MCF 10A (cell line): ENCODE measurements at regions of chr13 and their contacts with region 1.

Region 1: DNA sequence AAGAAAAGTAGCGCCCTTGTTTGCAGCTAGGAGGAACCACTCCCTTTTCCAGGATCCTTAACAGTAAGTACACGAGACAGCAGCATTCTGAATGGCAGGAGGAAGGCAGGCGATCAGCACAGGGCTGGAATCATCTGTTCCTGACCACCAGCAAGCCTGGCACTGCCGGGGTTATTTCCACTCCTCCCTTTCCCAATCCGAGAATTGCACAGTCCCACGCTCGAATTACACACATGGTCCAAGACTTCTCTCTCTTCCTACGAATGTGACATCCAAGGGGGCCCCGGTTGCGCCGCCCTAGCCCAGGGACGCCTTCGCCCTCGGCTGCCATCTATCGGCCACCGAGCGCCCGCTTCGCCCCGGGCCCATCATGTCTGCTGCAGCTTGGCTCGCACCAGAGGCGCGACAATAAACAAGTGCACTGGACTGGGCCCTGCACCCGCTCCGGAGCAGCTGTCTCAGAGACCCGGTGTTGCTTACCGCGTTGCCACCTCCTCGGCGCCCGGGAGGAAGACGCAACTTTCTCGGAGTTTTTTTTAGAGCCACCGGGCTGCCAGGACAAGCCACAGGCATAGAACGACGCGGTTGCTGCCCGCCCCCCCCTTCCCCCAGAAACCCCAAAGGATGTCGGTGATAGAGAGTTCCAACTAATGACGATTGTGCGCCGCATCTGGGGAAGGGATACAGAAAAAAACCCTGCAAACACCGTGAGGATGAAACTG is at the start of gene SLITRK5:
- DNase-seq: peak; percentile 94
- H3K4me3 Mint-ChIP-seq: peak within 1 kb of the TSS; percentile 85
- H3K27ac Mint-ChIP-seq: peak within 1 kb of the TSS; percentile 80
- H3K4me1 Mint-ChIP-seq: no peaks in the 10 kb centered on the region
- H3K27me3 Mint-ChIP-seq: no peaks in the 10 kb centered on the region
- CTCF ChIP-seq: peak; percentile 86
- total RNA-seq, gene SLITRK5: 0.16 and 0.25 TPM in 2 replicates

Region 2: DNA sequence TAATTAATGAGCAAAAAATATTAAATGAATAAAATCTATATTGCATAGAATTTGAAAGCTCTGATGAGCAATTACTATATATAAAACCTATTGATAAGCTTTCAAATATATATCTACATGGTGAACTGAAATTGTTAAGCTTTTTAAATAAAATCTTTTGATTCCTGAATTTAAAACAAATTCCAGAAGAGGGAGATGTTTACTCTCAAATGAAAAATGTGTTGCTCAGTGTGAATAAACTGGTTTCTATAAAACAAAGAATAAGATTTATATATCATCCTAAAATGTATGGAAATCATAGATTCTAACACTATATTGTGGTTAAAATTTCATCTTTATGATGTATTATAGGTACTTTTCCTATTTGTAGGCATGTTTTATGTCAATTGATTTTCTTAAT is 1700.5 kb before region 1 on chr13:
- CTCF ChIA-PET with region 1: no interaction called
- POLR2A ChIA-PET with region 1: no interaction called
- intact Hi-C with region 1: loop called (anchors 10 kb)
- DNase-seq: peak; percentile 25
- H3K4me3 Mint-ChIP-seq: no peak overlapping the region
- H3K27ac Mint-ChIP-seq: no peak overlapping the region
- H3K4me1 Mint-ChIP-seq: peaks cover 10% of the 10 kb centered on the region
- H3K27me3 Mint-ChIP-seq: no peaks in the 10 kb centered on the region
- CTCF ChIP-seq: peak; percentile 34

Region 3: DNA sequence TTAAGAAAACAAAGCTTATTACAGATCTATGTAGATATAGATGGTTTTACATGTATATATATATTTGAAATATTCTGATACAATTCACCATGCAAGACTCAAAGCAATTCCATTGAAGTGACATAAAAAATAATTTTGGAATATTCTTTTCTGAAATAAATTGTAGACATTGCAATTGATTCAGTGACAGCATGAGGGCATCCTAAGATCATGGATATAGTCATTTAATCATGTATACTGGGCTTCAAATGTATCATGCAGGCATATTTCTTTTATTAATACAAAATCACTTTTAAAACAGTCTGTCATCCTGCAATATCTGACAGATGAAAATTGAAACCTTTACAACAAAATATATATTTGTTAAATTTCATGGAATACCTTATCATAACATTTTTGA is 1585.3 kb before region 1 on chr13:
- CTCF ChIA-PET with region 1: interaction called, 3 read pairs
- POLR2A ChIA-PET with region 1: no interaction called
- intact Hi-C with region 1: loop called (anchors 2 kb)
- DNase-seq: peak; percentile 14
- H3K4me3 Mint-ChIP-seq: no peak overlapping the region
- H3K27ac Mint-ChIP-seq: no peak overlapping the region
- H3K4me1 Mint-ChIP-seq: peaks cover 6% of the 10 kb centered on the region
- H3K27me3 Mint-ChIP-seq: no peaks in the 10 kb centered on the region
- CTCF ChIP-seq: peak; percentile 22

Region 4: GRCh38 chr13:86870444-86870843 is 800.7 kb before region 1 on chr13:
- CTCF ChIA-PET with region 1: interaction called, 3 read pairs
- POLR2A ChIA-PET with region 1: no interaction called
- intact Hi-C with region 1: loop called (anchors 1 kb)
- DNase-seq: peak; percentile 45
- H3K4me3 Mint-ChIP-seq: no peak overlapping the region
- H3K27ac Mint-ChIP-seq: no peak overlapping the region
- H3K4me1 Mint-ChIP-seq: no peaks in the 10 kb centered on the region
- H3K27me3 Mint-ChIP-seq: no peaks in the 10 kb centered on the region
- CTCF ChIP-seq: peak; percentile 58

Region 5: DNA sequence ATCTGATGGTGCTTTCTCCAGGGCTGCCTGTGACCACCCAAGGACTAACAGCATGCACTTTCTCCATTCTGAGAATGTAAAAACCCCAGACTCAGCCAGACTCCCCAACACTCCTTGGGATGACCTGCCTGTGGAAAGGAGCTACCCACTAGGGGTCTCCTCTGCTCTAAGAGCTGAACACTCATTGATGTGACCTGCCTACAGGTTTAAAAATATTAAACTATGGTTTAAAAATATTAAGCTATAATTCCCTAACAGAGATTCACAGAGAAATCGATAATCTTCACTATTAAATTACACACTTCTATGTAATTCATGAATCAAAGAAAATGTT is 696.2 kb before region 1 on chr13:
- CTCF ChIA-PET with region 1: no interaction called
- POLR2A ChIA-PET with region 1: no interaction called
- intact Hi-C with region 1: no loop called
- DNase-seq: no peak
- H3K4me3 Mint-ChIP-seq: no peak overlapping the region
- H3K27ac Mint-ChIP-seq: no peak overlapping the region
- H3K4me1 Mint-ChIP-seq: peaks cover 6% of the 10 kb centered on the region
- H3K27me3 Mint-ChIP-seq: no peaks in the 10 kb centered on the region
- CTCF ChIP-seq: no peak

Region 6: DNA sequence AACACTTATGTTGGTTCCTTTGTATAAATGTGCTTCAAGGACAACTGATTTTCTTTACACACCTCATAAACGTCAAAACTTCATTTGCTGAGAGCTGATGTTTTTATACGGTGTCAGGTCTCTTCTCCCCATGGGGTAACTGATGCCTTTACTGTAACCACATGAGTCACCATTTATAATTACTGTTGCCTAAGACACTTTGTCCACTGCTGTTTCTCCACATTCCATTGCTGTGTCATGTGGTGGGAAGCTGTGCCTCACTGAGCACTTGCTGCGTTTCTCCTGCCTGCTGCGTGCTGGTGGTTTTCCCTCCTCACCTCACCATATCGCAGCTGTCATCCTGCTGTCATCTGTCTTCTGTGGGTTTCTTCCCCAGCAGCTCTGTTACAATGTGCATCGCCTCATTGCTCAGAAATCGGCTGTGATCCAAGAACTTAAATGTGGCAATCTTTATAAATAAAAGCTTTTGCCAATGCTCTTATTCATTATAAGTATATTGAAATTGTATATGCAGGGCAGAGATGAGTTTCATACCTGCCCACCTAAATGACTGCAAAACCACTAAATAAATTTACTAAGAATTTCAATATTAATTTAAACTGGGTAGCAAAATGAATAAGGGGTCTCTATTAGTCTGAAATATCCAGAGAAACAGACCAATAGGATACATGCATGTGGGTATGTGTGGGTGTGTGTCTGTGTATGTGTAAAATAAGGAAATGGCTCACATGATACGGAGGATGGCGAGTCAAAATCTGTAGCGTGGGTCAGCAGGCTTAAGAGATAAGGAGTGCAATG is 547.0 kb before region 1 on chr13:
- CTCF ChIA-PET with region 1: interaction called, 5 read pairs
- POLR2A ChIA-PET with region 1: interaction called, 3 read pairs
- intact Hi-C with region 1: loop called (anchors 5 kb)
- DNase-seq: peak; percentile 99
- H3K4me3 Mint-ChIP-seq: peak overlapping the region; percentile 55
- H3K27ac Mint-ChIP-seq: peak overlapping the region; percentile 94
- H3K4me1 Mint-ChIP-seq: peaks cover 23% of the 10 kb centered on the region
- H3K27me3 Mint-ChIP-seq: no peaks in the 10 kb centered on the region
- CTCF ChIP-seq: no peak

Region 7: GRCh38 chr13:87280139-87280538 is 391.1 kb before region 1 on chr13:
- CTCF ChIA-PET with region 1: interaction called, 3 read pairs
- POLR2A ChIA-PET with region 1: no interaction called
- intact Hi-C with region 1: loop called (anchors 2 kb)
- DNase-seq: no peak
- H3K4me3 Mint-ChIP-seq: no peak overlapping the region
- H3K27ac Mint-ChIP-seq: no peak overlapping the region
- H3K4me1 Mint-ChIP-seq: no peaks in the 10 kb centered on the region
- H3K27me3 Mint-ChIP-seq: no peaks in the 10 kb centered on the region
- CTCF ChIP-seq: no peak